ENCODE measurements at regions of chr2 and their contacts with region 1.

Region 1: GRCh38 chr2:229118336-229118735 is 152.8 kb downstream of the PID1 start:
- DNase-seq: no peak
- H3K4me3 ChIP-seq: no peak overlapping the region
- H3K4me3 Mint-ChIP-seq: no peak overlapping the region
- H3K27ac Mint-ChIP-seq: no peak overlapping the region
- H3K4me1 ChIP-seq: no peaks in the 10 kb centered on the region
- H3K4me1 Mint-ChIP-seq: no peaks in the 10 kb centered on the region
- H3K27me3 ChIP-seq: no peaks in the 10 kb centered on the region
- H3K27me3 Mint-ChIP-seq: no peaks in the 10 kb centered on the region
- CTCF ChIP-seq: no peak

Region 2: GRCh38 chr2:229080172-229080571 is 38.2 kb before region 1 on chr2:
- CTCF ChIA-PET with region 1: no interaction called
- POLR2A ChIA-PET with region 1: no interaction called
- intact Hi-C with region 1: no loop called
- DNase-seq: no peak
- H3K4me3 ChIP-seq: no peak overlapping the region
- H3K4me3 Mint-ChIP-seq: no peak overlapping the region
- H3K27ac Mint-ChIP-seq: no peak overlapping the region
- H3K4me1 ChIP-seq: no peaks in the 10 kb centered on the region
- H3K4me1 Mint-ChIP-seq: no peaks in the 10 kb centered on the region
- H3K27me3 ChIP-seq: no peaks in the 10 kb centered on the region
- H3K27me3 Mint-ChIP-seq: no peaks in the 10 kb centered on the region
- CTCF ChIP-seq: no peak

Region 3: GRCh38 chr2:229090225-229090624 is 28.1 kb before region 1 on chr2:
- CTCF ChIA-PET with region 1: no interaction called
- POLR2A ChIA-PET with region 1: no interaction called
- intact Hi-C with region 1: loop called (anchors 1 kb)
- DNase-seq: no peak
- H3K4me3 ChIP-seq: no peak overlapping the region
- H3K4me3 Mint-ChIP-seq: no peak overlapping the region
- H3K27ac Mint-ChIP-seq: no peak overlapping the region
- H3K4me1 ChIP-seq: peaks cover 22% of the 10 kb centered on the region
- H3K4me1 Mint-ChIP-seq: peaks cover 21% of the 10 kb centered on the region
- H3K27me3 ChIP-seq: no peaks in the 10 kb centered on the region
- H3K27me3 Mint-ChIP-seq: no peaks in the 10 kb centered on the region
- CTCF ChIP-seq: no peak